Thyroid gland (tissue), 4 donors: ENCODE measurements at regions of chr1 and their contacts with region 1.

Region 1: DNA sequence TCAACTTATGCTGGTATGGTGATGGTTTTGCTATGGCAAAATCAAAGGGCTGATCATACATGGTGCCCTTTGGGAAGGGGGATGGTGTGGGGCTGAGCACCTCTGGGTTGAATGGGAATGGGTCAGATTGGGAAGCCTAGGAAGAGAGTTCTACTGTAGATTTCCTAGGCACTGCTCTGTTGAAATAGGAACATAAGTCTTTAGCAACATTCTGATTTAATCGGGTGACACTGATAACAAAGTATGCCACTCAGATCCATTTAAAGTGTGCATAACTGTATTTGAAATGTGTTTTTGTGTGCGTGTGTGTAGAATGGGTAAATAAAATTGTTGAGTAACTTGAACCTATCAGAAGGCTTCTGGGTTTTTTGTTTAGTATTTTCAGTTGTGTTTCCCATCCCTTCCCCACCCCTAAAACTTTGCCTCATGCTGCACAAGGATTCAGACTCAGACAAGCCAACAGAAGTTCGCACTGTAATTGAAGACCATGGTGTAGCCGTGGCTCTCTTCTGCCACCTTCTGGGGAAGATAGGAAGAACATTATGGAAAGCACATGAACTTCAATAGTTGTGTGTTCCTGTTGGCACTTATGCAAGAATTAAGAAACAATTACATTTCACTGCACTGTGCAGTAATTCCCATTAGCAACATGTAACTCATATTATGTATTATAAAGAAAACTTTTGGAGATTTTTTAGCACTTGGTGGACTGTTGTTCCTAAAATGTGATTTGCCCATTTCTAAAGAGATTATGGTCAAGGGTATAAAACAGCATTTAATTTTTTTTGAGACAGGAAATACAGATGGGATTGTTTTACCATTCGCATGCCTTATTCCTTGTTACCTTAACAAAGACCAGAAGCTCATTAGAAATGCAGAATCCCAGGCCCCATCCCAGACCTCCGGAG is 10.9 kb upstream of the C4BPB start:
- DNase-seq: peak; percentile 62 to 67
- H3K4me3 ChIP-seq: no peak overlapping the region
- H3K27ac ChIP-seq: peak overlapping the region in 2 of 3 donors; percentile 18 to 26
- H3K4me1 ChIP-seq: peaks cover 7 to 11% of the 10 kb centered on the region in 2 donors
- H3K27me3 ChIP-seq: no peaks in the 10 kb centered on the region
- CTCF ChIP-seq: peak; percentile 57 to 95 (median 90)
- POLR2A ChIP-seq: no peak

Region 2: DNA sequence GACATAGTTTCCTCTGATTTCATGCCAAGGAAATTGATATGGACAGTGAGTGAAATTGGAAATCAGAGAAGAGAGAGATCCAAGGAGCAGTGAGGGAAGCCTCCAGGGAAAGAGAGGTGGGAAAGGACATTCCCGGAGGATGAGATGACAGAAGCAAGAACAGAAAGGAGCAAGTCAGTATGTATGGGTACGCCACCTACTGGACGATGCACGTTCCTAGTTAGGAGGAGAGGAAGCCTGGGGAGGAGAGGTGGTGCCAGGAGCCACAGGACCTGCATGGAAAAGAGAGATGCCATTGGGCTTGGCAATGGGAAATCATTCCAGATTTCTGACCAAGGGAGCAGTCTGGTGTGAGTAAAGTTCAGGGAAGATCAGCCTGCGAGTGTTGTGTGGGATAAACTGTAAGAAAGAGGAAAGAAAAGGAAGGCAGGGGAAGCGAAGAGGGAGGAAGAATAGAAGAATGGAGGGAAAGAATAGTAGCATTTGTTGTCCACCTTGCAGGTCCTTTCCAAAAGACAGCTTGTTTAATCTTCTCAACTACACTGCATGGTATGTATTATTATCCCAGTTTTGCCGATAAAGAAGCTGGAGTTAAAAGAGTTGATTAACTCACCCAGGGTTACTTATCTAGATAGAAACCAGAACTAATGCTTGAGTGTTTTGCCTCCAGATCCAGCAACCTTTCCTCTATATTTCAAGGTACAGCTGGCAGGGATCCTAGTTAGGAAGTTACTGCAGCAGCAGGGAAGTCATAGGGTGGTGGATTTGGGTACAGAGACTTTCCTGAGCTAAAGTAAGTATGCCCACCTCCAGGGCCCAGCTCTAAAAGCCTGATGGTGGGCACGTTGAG is 72.5 kb before region 1 on chr1:
- intact Hi-C with region 1: loop called (anchors 10 kb)
- DNase-seq: peak; percentile 59 to 70
- H3K4me3 ChIP-seq: no peak overlapping the region
- H3K27ac ChIP-seq: peak overlapping the region in 2 of 3 donors; percentile 77 to 81
- H3K4me1 ChIP-seq: peaks cover 43 to 64% of the 10 kb centered on the region in 2 donors
- H3K27me3 ChIP-seq: no peaks in the 10 kb centered on the region
- CTCF ChIP-seq: peak in 4 of 6 experiments; percentile 16 to 62 (median 53)
- POLR2A ChIP-seq: no peak